K562 (cell line): ENCODE measurements at regions of chr20 and their contacts with region 1.

Region 1: DNA sequence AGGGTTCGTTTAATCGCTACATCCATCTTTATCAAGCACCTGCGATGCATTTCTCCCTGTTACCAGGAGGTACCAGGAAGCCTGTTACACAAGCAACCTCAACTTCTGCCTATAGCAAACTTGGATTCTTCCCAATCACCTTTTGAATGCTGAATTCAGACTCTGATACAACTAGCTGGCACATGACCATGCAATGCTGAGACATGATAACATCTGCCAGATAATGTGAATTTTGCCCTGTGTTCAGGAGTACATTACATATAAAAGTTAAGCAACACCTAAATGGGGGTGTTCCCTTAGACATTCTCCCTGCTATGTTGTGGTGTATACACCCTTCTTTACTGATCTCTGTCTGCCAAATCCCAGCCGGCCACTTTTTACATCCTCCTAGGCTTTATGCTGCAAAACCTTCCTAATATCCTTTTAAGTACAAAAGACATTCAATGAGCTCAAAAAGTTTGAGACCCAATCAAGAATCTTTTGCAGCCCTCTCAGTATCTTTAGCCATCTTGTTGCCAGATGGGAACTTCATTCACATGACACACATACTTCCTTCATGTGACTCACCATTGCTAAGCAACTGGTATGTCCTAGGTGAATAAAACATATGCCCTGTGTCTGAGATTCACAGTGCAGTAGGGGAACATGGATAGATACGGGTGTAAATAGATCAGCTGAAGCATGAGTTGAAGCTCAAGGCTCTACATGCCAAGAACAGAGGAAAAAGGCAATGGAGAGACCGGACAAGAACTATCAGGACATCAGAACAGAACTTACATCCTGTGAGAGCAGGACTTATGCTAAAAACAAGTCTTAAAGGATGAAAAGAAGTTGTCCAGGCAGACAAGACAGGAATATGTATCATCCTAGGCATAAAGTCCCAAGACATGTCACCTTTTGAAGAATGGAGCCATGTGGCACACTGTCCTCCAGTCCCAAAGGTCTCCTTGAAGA is 84.3 kb downstream of the ZHX3 start:
- DNase-seq: no peak
- ATAC-seq: no peak
- H3K4me3 ChIP-seq: no peak overlapping the region
- H3K27ac ChIP-seq: no peak overlapping the region
- H3K4me1 ChIP-seq: peaks cover 3 to 4% of the 10 kb centered on the region in 2 experiments; a peak in 4 of 5 replicates
- H3K27me3 ChIP-seq: no peaks in the 10 kb centered on the region
- CTCF ChIP-seq: no peak
- EP300 ChIP-seq: no peak
- POLR2A ChIP-seq: no peak
- RAD21 ChIP-seq: no peak

Region 2: DNA sequence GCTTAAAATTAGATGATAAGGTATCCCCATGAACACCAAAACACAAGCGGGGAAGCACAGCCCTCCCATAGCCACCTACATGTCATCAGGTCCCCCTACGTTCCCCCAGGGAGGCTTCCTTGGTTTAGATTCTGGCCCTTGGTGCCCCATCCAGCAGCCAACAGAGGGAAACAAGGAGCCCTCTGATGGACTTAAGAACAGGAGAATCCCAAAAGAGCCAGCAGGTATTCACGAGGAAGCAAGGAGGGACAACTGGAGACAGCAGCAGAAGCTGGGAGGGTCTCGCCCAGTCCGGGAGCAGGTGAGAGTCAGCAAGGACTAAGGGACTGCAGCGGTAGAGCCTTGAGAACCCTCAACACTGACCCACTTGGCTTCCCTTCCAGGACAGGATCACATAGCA is 263.0 kb before region 1 on chr20:
- CTCF ChIA-PET with region 1: interaction called, 5 read pairs
- POLR2A ChIA-PET with region 1: no interaction called
- in situ Hi-C with region 1: loop called (anchors 10 kb)
- intact Hi-C with region 1: loop called (anchors 2 kb)
- DNase-seq: no peak
- ATAC-seq: no peak
- H3K4me3 ChIP-seq: no peak overlapping the region
- H3K27ac ChIP-seq: no peak overlapping the region
- H3K4me1 ChIP-seq: peaks cover 0 to 4% of the 10 kb centered on the region in 2 experiments; a peak in 1 of 5 replicates
- H3K27me3 ChIP-seq: no peaks in the 10 kb centered on the region; a peak in 2 of 5 replicates
- CTCF ChIP-seq: peak in 1 of 3 experiments; percentile 15; a peak in 1 of 6 replicates
- EP300 ChIP-seq: no peak
- POLR2A ChIP-seq: no peak
- RAD21 ChIP-seq: peak in 1 of 2 experiments; percentile 41; a peak in 1 of 4 replicates

Region 3: GRCh38 chr20:41136680-41137613 is 96.3 kb before region 1 on chr20 and contains the start of gene PLCG1:
- CTCF ChIA-PET with region 1: interaction called, 3 read pairs
- POLR2A ChIA-PET with region 1: no interaction called
- in situ Hi-C with region 1: no loop called
- intact Hi-C with region 1: loop called (anchors 2 kb)
- DNase-seq: peak; percentile 91 to 98 (median 98)
- ATAC-seq: peak; percentile 86
- H3K4me3 ChIP-seq: peak within 1 kb of the TSS; percentile 74
- H3K27ac ChIP-seq: peak within 1 kb of the TSS; percentile 86
- H3K4me1 ChIP-seq: peaks cover 33 to 47% of the 10 kb centered on the region in 2 experiments; a peak in 4 of 5 replicates
- H3K27me3 ChIP-seq: no peaks in the 10 kb centered on the region
- CTCF ChIP-seq: no peak
- EP300 ChIP-seq: no peak
- POLR2A ChIP-seq: peak; percentile 78
- RAD21 ChIP-seq: no peak
- polyA plus RNA-seq, gene PLCG1: 1.7 to 2.2 TPM

Region 4: GRCh38 chr20:41173161-41173721 is 60.0 kb before region 1 on chr20:
- CTCF ChIA-PET with region 1: interaction called, 8 read pairs
- POLR2A ChIA-PET with region 1: interaction called, 3 read pairs
- in situ Hi-C with region 1: no loop called
- intact Hi-C with region 1: loop called (anchors 1 kb)
- DNase-seq: peak; percentile 78 to 82 (median 79)
- ATAC-seq: peak; percentile 98
- H3K4me3 ChIP-seq: no peak overlapping the region
- H3K27ac ChIP-seq: no peak overlapping the region
- H3K4me1 ChIP-seq: no peaks in the 10 kb centered on the region
- H3K27me3 ChIP-seq: no peaks in the 10 kb centered on the region
- CTCF ChIP-seq: peak; percentile 89 to 95 (median 93)
- EP300 ChIP-seq: no peak
- POLR2A ChIP-seq: no peak
- RAD21 ChIP-seq: peak; percentile 87 to 91